Activated CD4-positive, alpha-beta memory T cell treated with anti-CD3 and anti-CD28 coated beads for 36 hours (primary cell): ENCODE measurements at regions of chr20 and their contacts with region 1.

Region 1: DNA sequence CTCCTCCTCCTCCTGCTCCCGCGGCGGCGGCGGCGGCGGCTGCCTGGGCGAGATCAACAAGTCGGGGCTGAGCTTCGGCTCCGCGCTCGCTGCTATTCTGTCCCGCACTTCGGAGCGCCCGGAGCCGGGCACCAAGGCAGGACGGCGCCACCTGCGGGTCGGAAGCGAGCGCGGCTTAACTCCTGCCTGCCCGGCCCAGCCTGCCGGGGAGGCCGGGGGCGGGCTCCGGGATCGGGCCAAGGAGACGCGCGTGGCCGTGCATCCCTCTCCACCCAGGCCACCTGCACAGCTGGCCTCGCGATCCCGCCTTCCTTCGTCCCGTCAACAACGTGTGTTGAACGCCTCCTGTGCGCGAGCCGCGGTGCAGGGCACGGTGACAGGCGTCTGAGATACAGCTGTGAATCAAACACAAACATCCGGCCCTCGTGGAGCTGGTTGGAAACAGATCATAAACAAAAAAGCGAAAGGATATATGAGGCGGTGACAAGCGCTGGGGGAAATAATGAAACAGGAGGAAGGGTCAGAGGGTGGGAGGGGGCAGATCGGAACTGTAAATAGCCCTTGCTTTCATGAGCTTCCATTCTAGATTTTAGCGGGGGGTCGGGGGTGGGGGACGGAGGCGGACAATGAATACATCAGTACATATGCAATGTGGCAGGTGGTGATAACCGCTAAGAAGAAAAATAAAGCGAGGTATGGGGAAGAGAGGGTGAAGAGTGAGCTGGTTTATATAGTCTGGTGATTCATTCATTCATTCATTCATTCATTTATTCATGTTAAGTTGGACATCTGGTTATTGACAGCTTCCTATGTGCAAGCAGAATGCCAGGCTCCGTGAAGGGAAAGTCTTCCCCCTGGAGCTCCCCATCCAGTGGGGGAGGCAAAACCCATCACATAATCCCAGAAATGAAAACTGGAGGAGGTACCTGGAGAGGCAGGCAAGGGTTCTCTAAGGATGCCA is 2.0 kb upstream of the KCNB1 start:
- DNase-seq: peak; percentile 80
- H3K4me3 Mint-ChIP-seq: peak overlapping the region; percentile 61
- H3K27ac Mint-ChIP-seq: no peak overlapping the region
- H3K4me1 Mint-ChIP-seq: peaks cover 4% of the 10 kb centered on the region
- H3K27me3 Mint-ChIP-seq: peaks cover 60% of the 10 kb centered on the region

Region 2: GRCh38 chr20:49276161-49276960 is 208.1 kb before region 1 on chr20:
- CTCF ChIA-PET with region 1: no interaction called
- POLR2A ChIA-PET with region 1: no interaction called
- intact Hi-C with region 1: no loop called
- DNase-seq: peak; percentile 77
- H3K4me3 Mint-ChIP-seq: peak overlapping the region; percentile 99
- H3K27ac Mint-ChIP-seq: peak overlapping the region; percentile 99
- H3K4me1 Mint-ChIP-seq: peaks cover 48% of the 10 kb centered on the region
- H3K27me3 Mint-ChIP-seq: peaks cover 2% of the 10 kb centered on the region

Region 3: GRCh38 chr20:49338061-49338460 is 146.4 kb before region 1 on chr20:
- CTCF ChIA-PET with region 1: interaction called, 35 read pairs
- POLR2A ChIA-PET with region 1: no interaction called
- intact Hi-C with region 1: loop called (anchors 2 kb)
- DNase-seq: no peak
- H3K4me3 Mint-ChIP-seq: no peak overlapping the region
- H3K27ac Mint-ChIP-seq: no peak overlapping the region
- H3K4me1 Mint-ChIP-seq: no peaks in the 10 kb centered on the region
- H3K27me3 Mint-ChIP-seq: peaks cover 10% of the 10 kb centered on the region

Region 4: DNA sequence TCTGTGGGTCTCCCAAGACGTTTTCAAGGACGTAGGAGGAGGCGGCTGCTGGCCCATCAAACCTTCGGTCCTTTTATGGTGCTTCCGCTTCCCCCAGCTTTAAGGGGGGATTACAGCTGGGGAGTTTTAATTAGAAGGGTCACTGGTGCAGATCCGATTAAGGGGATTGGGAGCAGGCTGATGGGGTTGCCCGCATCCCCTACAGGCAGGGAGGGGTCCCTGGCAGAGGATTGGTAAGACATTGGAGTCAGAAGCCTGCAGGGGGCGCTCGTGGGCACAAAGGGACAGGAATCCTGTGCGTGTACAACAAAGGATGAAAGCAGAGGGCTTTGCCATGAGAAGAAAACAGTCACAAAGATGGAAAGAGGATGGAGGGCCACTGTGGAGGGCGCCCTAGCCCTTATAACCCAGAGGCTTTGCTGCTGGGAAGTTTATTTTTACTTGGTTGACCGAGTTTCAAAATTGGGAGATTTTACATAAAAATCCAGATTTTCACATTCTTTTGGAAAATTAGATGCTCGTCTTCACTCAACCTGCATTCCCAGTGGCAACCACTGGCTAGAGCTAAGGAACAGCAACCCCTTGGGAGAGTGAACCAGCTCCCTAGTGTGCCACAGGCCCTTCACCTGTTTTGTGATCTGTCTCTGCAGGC is 99.9 kb before region 1 on chr20:
- CTCF ChIA-PET with region 1: interaction called, 59 read pairs
- POLR2A ChIA-PET with region 1: no interaction called
- intact Hi-C with region 1: loop called (anchors 5 kb)
- DNase-seq: peak; percentile 81
- H3K4me3 Mint-ChIP-seq: no peak overlapping the region
- H3K27ac Mint-ChIP-seq: no peak overlapping the region
- H3K4me1 Mint-ChIP-seq: no peaks in the 10 kb centered on the region
- H3K27me3 Mint-ChIP-seq: peaks cover 20% of the 10 kb centered on the region

Region 5: DNA sequence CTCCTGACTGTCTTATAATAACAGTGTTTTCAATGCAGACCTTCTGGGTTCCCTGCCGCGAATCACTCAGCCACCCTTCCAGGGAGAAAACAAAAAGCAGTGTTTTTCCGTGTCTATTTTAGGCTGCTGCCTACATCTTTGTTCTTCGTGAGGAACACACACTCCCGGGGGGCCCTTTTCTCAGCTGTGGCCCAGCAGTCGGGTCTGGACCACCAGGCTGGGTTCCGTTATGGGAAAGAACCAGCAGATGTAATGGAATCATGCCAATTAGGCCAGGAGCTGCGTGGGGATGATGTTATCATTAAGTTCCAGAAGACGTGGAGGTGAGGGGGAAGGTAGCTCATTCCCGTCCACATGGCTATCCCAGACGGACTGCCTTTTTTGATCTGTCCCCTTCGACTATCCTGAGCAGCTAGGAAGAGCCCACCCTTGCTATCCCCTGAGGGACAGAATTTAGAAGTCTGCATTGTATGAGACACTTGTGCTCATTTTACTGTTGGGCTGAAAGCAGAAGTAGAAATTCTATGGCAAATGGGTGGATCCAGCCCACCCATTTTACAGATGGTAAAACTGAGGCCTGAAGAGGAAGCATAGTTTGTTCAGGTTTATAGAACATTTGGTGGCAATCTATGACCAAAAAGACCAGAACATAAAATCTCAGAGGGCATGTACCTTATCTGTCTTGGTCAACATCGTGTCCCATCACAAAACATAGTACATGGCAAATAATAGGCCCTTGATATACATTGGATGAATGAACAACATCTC is 56.5 kb before region 1 on chr20:
- CTCF ChIA-PET with region 1: interaction called, 10 read pairs
- POLR2A ChIA-PET with region 1: no interaction called
- intact Hi-C with region 1: no loop called
- DNase-seq: no peak
- H3K4me3 Mint-ChIP-seq: no peak overlapping the region
- H3K27ac Mint-ChIP-seq: no peak overlapping the region
- H3K4me1 Mint-ChIP-seq: no peaks in the 10 kb centered on the region
- H3K27me3 Mint-ChIP-seq: peaks cover 11% of the 10 kb centered on the region

Region 6: DNA sequence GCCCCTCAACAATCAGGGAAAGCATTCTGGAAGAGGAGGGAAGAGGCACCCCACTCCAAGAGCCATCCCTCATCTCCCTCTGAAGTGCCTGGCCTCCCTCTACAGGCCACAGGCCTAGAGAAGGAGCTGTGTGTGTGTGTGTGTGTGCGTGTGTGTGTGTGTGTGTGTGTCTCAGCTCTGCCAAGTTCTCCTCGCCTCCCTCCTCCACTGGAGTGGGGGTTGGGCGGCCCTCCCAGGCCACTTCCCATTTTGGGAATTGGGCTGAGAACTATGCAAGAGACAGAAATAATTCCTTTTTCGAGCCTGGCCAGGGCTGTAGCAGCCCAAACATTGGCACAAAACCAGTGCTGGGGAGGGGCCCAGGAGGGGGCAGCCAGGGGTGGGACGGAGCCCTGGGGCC is 37.7 kb before region 1 on chr20:
- CTCF ChIA-PET with region 1: no interaction called
- POLR2A ChIA-PET with region 1: no interaction called
- intact Hi-C with region 1: no loop called
- DNase-seq: no peak
- H3K4me3 Mint-ChIP-seq: no peak overlapping the region
- H3K27ac Mint-ChIP-seq: no peak overlapping the region
- H3K4me1 Mint-ChIP-seq: no peaks in the 10 kb centered on the region
- H3K27me3 Mint-ChIP-seq: peaks cover 32% of the 10 kb centered on the region

Region 7: DNA sequence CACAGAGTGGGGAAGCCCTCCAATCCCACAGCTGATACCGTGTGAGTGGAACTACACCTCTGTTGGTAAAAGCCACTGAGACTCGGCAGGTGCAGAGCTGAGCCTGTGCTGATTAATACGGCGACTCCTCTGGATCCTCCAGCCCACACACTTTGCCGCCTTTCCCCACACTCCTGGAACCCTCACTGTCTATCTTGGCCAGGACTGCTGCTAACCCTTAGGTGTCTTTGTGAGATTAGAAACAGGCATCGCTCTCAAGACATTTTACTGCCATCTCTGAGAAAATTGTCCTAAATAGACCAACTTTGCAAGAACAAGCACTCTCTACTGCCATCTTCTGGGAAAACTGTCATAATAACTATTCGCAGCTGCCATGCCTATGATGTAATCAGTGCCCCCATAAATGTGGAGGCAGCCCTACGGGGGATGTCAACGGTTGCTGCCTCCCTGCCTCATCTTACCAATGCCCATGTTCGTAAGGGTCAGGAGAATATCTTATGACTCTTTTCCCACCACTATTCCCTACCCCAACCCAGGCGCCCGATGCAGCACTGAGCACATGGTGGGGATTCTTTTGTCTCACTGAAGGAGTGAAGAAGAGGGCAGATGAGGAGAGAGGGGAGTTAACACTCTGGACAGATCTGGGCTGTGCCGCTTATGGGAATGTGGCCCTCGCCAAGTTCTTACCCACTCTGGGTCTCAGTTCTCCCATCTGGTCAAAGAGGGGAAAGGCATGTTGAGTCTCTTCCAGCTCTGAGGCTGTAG is 24.2 kb after region 1 on chr20:
- CTCF ChIA-PET with region 1: interaction called, 17 read pairs
- POLR2A ChIA-PET with region 1: no interaction called
- intact Hi-C with region 1: no loop called
- DNase-seq: no peak
- H3K4me3 Mint-ChIP-seq: no peak overlapping the region
- H3K27ac Mint-ChIP-seq: no peak overlapping the region
- H3K4me1 Mint-ChIP-seq: peaks cover 3% of the 10 kb centered on the region
- H3K27me3 Mint-ChIP-seq: peaks cover 46% of the 10 kb centered on the region

Region 8: GRCh38 chr20:49534255-49534712 is 49.8 kb after region 1 on chr20:
- CTCF ChIA-PET with region 1: interaction called, 25 read pairs
- POLR2A ChIA-PET with region 1: no interaction called
- intact Hi-C with region 1: loop called (anchors 1 kb)
- DNase-seq: peak; percentile 74
- H3K4me3 Mint-ChIP-seq: no peak overlapping the region
- H3K27ac Mint-ChIP-seq: peak overlapping the region; percentile 69
- H3K4me1 Mint-ChIP-seq: peaks cover 21% of the 10 kb centered on the region
- H3K27me3 Mint-ChIP-seq: peaks cover 9% of the 10 kb centered on the region